ENCODE measurements at regions of chr14 and their contacts with region 1.

Region 1: DNA sequence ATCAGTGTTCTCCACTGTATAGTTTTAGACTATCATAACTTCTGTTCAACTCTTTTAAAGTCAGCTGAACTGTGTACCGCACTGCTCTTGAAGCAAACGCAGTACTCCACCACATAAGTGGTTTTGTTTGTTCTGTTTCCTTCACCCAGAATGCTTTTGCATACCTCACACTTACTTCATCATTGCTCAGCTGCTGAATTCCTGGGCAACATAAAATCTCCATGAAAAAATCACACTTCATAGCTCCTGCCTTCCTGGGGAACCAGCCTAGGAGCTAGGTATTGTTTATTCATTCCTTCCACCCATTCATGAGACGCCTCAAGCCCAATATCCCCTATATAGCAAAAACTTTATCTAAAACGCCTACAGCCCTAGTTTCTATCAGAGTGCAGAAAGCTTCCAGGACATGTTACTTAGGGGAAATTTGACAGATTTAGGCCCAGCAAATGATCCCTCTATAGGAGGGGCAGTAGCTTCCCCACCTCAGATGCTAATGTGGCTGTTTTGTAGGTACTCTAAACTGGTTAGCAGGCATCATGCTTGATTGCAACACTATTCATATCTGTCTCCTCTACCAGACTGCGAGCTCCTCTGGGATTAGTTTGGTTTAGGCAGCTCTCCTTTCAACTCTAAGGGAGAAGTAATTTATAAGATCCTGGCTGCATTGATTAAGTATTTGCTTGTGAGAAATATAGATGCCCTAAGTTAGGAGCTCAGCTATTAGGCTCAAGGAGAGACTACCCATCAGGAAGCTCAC is 44.5 kb downstream of the LRRC9 start:
- DNase-seq: no peak
- H3K4me3 Mint-ChIP-seq: peak overlapping the region; percentile 71
- H3K27ac Mint-ChIP-seq: peak overlapping the region; percentile 5
- H3K4me1 Mint-ChIP-seq: peaks cover 12% of the 10 kb centered on the region
- H3K27me3 Mint-ChIP-seq: no peaks in the 10 kb centered on the region

Region 2: DNA sequence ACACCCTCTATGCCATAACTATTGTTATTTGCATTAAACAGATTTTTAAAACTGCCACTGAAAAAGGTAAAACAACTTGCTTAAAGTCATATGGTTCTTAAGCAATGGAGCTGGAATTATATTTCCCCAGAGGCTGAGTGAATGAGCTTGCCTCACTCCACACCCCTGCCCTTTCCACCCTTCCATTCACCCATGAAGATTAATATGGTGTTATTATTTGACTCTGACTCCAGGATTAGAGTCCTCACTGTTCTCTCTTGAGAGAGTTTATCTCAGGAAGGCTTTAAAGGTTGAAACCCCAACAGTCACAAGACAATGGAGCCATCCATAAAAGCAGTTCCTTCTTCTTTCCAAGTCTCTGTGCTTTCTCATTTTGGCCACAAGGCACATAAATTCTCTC is 178.8 kb before region 1 on chr14:
- CTCF ChIA-PET with region 1: no interaction called
- intact Hi-C with region 1: no loop called
- DNase-seq: no peak
- H3K4me3 Mint-ChIP-seq: no peak overlapping the region
- H3K27ac Mint-ChIP-seq: no peak overlapping the region
- H3K4me1 Mint-ChIP-seq: no peaks in the 10 kb centered on the region
- H3K27me3 Mint-ChIP-seq: peaks cover 5% of the 10 kb centered on the region

Region 3: DNA sequence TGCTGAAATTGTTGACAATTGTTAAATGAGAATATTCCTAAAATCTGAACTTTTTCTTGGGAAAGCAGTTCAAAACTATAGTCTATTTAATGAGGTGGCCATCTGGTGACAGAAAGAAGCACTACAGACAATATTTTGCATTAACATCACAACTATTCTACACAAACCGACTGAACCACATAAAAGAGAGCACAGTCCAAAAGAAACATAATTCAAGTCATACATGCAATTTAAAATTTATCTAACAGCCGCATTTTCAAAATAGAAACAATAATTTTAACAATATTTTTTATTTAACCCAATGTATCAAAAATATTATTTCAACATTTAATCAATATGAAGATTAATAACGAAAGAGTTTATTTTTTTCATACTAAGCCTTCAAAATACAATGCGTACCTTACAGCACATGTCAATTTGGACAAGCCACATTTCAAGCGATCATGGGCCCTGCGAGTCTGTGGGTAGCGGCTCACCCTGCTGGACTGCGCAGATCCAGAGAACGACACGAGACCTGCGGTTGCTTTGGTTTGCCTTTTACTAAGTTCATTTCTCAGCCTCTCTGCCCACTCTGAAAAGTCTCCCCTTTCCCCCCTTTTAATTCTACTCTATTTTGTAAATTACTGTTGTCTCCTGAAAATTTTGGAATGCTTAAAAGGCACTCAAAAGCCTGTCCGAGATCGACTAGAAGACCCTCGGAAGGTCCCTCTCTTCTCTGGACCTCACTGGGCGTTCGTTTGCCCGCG is 45.4 kb before region 1 on chr14:
- CTCF ChIA-PET with region 1: interaction called, 7 read pairs
- intact Hi-C with region 1: loop called (anchors 2 kb)
- DNase-seq: peak; percentile 27
- H3K4me3 Mint-ChIP-seq: peak overlapping the region; percentile 54
- H3K27ac Mint-ChIP-seq: no peak overlapping the region
- H3K4me1 Mint-ChIP-seq: peaks cover 7% of the 10 kb centered on the region
- H3K27me3 Mint-ChIP-seq: peaks cover 43% of the 10 kb centered on the region

Region 4: GRCh38 chr14:59986556-59987059 is 22.2 kb after region 1 on chr14:
- CTCF ChIA-PET with region 1: interaction called, 17 read pairs
- intact Hi-C with region 1: no loop called
- DNase-seq: no peak
- H3K4me3 Mint-ChIP-seq: no peak overlapping the region
- H3K27ac Mint-ChIP-seq: no peak overlapping the region
- H3K4me1 Mint-ChIP-seq: no peaks in the 10 kb centered on the region
- H3K27me3 Mint-ChIP-seq: peaks cover 7% of the 10 kb centered on the region

Region 5: GRCh38 chr14:60091550-60092530 is 127.4 kb after region 1 on chr14 and contains the start of gene PCNX4:
- CTCF ChIA-PET with region 1: interaction called, 3 read pairs
- intact Hi-C with region 1: loop called (anchors 1 kb)
- DNase-seq: peak; percentile 95
- H3K4me3 Mint-ChIP-seq: peak within 1 kb of the TSS; percentile 98
- H3K27ac Mint-ChIP-seq: peak within 1 kb of the TSS; percentile 95
- H3K4me1 Mint-ChIP-seq: peaks cover 34% of the 10 kb centered on the region
- H3K27me3 Mint-ChIP-seq: peaks cover 9% of the 10 kb centered on the region
- total RNA-seq, gene PCNX4: 24.9 to 27.5 TPM

Region 6: GRCh38 chr14:60164712-60165546 is 200.5 kb after region 1 on chr14 and contains the start of gene DHRS7:
- CTCF ChIA-PET with region 1: interaction called, 10 read pairs
- intact Hi-C with region 1: loop called (anchors 1 kb)
- DNase-seq: peak; percentile 65
- H3K4me3 Mint-ChIP-seq: peak within 1 kb of the TSS; percentile 89
- H3K27ac Mint-ChIP-seq: peak within 1 kb of the TSS; percentile 96
- H3K4me1 Mint-ChIP-seq: peaks cover 39% of the 10 kb centered on the region
- H3K27me3 Mint-ChIP-seq: no peaks in the 10 kb centered on the region
- total RNA-seq, gene DHRS7: 40.5 to 43.4 TPM

Region 7: DNA sequence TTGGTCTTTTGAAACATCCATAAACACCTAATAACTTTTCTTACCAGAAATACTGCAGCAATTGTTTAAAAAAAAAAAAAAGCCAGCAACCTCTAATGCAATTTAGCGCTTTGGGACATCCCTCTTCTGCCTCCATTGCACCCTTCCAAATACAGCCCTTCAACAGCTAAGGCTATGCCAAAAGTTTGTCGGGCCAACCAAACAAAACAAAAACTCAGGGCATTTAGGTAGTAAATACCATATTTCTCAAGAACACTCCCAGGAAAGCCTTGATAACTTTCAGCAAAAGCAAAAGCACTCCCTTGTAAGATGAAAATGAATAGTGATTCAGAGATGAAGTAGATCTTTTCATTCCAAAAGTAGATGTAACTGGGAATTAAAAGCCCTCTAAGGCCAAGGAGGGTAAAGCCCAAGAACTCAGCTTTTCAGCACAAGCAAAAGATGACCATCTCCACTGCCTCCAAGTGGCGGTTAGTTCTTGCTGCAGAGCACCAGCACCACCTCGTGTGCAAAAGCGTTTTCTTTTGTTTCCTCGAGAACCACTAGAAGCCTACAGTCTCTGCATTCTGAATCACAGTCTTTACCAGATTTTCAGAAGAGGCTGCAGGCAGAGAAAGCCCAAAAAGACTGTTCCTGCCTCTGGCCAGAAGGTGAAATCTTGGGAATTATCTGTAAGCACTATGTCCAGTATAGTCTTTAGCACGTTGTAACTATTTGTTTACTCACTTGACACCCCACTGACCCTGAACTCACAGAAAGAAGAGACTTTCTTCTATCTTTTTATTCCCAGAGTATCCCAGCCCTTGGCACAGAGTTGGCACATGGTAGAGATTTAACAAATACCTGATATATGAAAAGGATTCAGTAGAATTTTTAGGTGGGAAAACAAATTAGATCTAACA is 597.7 kb after region 1 on chr14:
- CTCF ChIA-PET with region 1: no interaction called
- intact Hi-C with region 1: loop called (anchors 5 kb)
- DNase-seq: peak; percentile 59
- H3K4me3 Mint-ChIP-seq: no peak overlapping the region
- H3K27ac Mint-ChIP-seq: no peak overlapping the region
- H3K4me1 Mint-ChIP-seq: no peaks in the 10 kb centered on the region
- H3K27me3 Mint-ChIP-seq: no peaks in the 10 kb centered on the region

Measured in activated naive CD4-positive, alpha-beta T cell treated with anti-CD3 and anti-CD28 coated beads for 36 hours (primary cell).